Cardiac septum (tissue), 1 donor: ENCODE measurements at regions of chr17 and their contacts with region 1.

Region 1: DNA sequence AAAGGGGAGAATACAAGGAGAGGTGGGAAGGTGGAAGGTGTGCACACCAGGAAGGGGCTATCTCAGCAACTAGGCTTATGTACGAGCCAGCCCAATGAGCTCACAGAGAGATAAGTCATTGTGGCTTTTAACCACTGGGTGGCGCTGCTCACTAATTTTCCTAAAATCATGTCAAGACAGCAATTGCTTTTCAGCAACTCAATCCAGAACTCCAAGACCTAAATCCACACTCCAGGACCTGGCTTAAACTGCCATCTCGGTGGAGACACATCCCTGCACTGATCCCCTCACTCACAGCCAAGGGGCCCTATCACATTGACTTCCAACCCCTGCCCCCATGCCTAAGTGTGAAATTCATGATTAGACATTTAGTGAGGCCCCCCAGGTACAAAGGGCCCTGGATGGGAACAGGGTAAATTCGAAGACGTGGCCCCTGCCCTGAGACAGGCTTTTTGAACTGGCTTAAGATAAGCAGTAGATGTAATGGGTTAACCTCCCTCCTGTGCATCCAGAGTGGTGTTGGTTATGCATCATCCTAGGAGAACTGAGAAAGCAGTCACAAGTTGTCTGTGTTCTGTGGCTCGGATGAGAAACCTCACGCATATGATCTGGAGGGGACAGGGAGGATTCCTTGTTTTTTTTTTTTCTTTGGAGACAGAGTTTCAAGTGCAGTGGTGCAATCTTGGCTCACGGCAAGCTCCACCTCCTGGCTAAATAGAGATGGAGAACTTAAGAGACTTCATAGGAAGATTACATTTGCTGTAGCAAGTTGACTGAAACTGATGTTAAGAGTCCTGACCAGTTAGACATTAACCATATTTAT is 11.5 kb downstream of the CCL16 start:
- DNase-seq: peak; percentile 81

Region 2: DNA sequence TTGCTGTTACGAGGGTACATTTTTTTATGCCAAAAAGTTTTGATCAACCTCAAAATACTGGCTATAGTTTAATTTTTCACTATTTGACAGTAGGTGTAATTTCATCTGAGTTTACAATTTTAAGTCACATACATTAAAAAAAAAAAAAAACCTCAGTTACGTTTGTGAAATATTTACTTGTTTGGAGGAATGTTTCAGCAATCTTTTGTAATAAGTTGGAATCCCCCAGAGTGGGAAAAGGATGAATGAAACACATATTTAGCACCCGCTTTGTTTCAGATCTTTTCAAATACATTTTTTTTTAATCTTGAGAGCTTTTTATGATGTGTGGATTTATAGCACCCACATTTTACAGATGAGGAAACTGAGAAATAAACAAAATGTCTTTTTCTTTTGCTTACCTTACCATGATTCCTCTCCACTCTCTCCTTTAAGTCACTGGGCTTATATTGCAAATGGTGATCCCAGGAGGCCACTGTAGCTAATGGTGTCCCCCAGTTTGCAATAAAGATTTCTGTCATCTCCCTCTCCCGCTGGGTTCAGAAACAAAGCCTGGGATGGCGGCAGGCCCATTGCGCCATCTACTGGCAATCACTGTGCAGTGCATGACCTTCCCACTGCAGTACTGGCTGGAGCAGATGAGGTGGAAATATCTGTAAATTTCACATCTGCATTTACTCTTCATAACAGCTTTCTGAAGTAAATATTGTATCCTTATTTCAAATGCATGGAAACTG is 179.0 kb after region 1 on chr17:
- intact Hi-C with region 1: loop called (anchors 1 kb)
- DNase-seq: peak; percentile 92

Region 3: DNA sequence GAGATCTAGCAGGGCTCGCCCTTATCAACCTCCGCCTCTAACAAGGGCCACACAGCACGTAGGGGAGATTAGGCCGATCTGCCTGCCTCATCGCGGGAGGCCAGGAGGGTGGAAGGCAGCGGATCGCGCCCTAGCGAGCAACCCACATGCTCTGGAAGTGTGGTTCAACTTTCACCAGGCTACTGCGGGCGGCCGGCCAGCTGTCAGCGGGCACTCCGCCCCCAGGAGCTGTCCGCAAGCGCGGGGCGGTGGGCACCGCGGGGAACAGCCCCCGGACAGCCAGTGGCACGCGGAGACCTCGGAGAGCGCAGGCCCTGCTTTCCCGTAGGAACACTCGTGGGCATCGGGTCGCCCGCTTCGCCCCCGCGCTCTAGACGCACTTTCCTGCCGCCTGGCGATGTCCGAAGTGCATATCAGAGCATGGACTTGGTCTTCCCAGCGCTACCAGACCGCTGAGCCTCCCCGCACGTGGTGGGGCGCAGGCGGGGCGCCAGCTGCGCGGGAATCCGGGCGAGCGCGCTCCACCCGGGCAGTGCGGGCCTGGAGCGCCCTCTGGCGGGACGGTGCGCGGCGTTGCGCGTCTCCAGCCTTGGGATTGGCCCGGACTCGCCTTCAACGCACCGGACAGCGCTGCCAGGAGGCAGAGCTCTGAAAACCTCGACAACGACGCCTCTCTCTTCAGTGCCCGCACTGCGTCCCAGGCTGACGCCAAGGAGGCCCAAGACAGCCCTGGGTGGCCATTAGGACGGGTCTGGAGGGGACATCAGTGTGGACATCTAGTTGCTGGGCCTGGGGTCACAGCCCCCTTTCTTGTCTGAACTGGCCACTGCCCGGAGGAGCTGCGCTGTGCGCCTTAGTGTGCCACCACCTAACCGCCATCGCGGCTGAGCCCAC is 513.1 kb after region 1 on chr17:
- intact Hi-C with region 1: loop called (anchors 2 kb)
- DNase-seq: peak; percentile 91